Tibial artery (tissue), 4 donors: ENCODE measurements at regions of chr2 and their contacts with region 1.

Region 1: GRCh38 chr2:159797543-159798375 is at the start of gene CD302:
- DNase-seq: peak; percentile 68 to 88
- H3K4me3 ChIP-seq: peak within 1 kb of the TSS; percentile 63 to 70
- H3K27ac ChIP-seq: peak within 1 kb of the TSS; percentile 75 to 83
- H3K4me1 ChIP-seq: peaks cover 0 to 35% (median 9%) of the 10 kb centered on the region in 4 donors
- H3K27me3 ChIP-seq: no peaks in the 10 kb centered on the region
- CTCF ChIP-seq: peak in 1 of 2 experiments; percentile 12

Region 2: GRCh38 chr2:158473719-158474392 is 1323.9 kb before region 1 on chr2:
- intact Hi-C with region 1: no loop called
- DNase-seq: no peak
- H3K4me3 ChIP-seq: no peak overlapping the region
- H3K27ac ChIP-seq: no peak overlapping the region
- H3K4me1 ChIP-seq: peaks cover 0 to 19% (median 3%) of the 10 kb centered on the region in 4 donors
- H3K27me3 ChIP-seq: no peaks in the 10 kb centered on the region
- CTCF ChIP-seq: no peak

Region 3: DNA sequence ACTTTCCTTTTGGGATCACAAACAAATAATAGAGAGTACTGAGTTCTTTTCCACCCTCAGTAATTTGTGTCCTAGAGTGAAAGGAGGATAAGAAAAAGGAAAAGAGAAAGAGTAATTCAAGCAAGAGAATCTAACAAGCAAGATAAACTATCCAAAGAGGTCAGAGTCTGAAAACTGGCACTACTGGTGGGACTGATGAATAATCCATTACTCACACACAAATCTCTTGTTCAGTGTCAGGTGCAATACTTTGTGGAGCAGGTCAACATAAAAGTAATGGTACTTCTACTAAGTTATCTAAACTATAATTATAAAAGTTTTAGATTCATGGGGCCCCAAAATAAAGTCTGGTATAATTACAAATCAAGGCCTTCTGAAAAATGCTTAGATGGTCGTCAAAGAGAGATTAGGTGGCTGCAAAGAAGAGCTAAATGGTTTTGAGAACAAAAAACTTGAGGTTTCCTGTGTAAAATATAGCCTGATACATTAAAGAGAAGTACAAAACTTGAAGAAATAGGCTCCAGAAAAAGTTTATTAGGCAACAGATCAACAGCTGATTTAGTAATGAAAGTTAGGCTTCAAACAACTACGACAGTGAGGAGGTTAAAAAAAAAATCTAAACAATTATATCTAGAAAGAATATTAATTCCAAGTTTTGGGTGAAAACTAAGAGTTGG is 290.9 kb before region 1 on chr2:
- intact Hi-C with region 1: no loop called
- DNase-seq: no peak
- H3K4me3 ChIP-seq: no peak overlapping the region
- H3K27ac ChIP-seq: no peak overlapping the region
- H3K4me1 ChIP-seq: no peaks in the 10 kb centered on the region
- H3K27me3 ChIP-seq: no peaks in the 10 kb centered on the region
- CTCF ChIP-seq: no peak

Region 4: GRCh38 chr2:159615140-159615951 is 182.4 kb before region 1 on chr2:
- intact Hi-C with region 1: loop called (anchors 10 kb)
- DNase-seq: peak; percentile 92 to 94
- H3K4me3 ChIP-seq: peak overlapping the region; percentile 76 to 92
- H3K27ac ChIP-seq: peak overlapping the region; percentile 97 to 100
- H3K4me1 ChIP-seq: peaks cover 0 to 45% (median under 1%) of the 10 kb centered on the region in 4 donors
- H3K27me3 ChIP-seq: no peaks in the 10 kb centered on the region
- CTCF ChIP-seq: no peak

Region 5: DNA sequence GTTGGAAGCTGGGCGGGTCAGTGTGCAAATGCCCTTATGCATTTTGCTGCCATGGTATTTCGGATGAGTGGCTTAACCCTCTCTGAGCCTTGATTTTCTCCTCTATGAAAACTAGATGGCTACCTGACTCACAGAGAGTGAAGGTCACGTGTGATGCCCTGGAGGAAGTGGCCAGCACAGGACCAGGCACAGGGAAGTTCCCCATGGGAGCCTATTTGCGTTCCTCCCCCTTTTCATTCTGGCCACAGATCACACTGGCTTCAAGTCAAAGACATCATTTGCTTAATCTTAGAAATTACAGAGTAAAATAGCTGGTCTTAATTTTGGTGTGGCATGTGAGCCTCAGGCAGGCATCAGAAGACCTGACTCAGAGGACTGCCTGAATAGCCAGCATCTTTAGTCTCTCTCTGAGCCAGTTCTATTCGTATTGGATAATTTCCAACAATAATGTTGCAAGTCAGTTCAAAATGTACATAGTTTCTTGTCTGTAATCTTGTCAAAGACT is 57.9 kb after region 1 on chr2:
- intact Hi-C with region 1: no loop called
- DNase-seq: no peak
- H3K4me3 ChIP-seq: no peak overlapping the region
- H3K27ac ChIP-seq: no peak overlapping the region
- H3K4me1 ChIP-seq: peaks cover 0 to 8% (median 0%) of the 10 kb centered on the region in 4 donors
- H3K27me3 ChIP-seq: no peaks in the 10 kb centered on the region
- CTCF ChIP-seq: no peak